ENCODE measurements at regions of chrX and their contacts with region 1.

Region 1: DNA sequence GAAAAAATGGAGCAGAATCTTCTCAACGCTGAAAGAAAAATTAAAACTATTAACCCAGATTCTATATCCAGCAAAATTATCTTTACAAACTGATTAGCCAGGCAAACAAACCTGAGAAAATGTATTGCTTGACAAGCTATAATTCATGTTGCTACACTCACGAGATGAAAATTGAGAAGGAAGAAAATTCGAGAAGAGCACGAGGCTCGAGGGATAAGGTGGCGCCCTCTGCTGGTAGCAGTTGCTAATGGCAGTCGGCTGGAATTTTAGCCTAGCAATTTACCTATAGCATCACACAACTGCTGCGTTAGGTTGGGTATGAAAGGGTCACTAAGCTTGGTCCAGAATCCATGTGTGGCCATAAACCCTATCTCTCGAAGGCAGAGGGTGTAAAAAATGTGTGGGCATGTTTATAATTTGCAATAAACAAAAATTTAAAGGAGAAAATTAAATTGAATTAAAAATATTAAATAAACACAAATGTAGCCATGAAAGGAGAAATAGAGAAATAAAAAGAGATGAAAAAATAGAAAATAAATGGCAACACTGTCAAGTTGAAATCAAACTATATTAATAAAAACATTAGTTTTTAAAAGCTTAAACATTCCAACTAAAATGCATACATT is 126.6 kb downstream of the PPP4R3C start:
- DNase-seq: peak; percentile 16
- H3K4me3 ChIP-seq: no peak overlapping the region
- H3K27ac ChIP-seq: no peak overlapping the region
- H3K4me1 ChIP-seq: no peaks in the 10 kb centered on the region
- H3K27me3 ChIP-seq: no peaks in the 10 kb centered on the region
- CTCF ChIP-seq: peak; percentile 50 to 61
- POLR2A ChIP-seq: no peak

Region 2: GRCh38 chrX:26851981-26852380 is 484.6 kb before region 1 on chrX:
- CTCF ChIA-PET with region 1: interaction called, 6 read pairs
- POLR2A ChIA-PET with region 1: no interaction called
- dilution Hi-C with region 1: no loop called
- intact Hi-C with region 1: loop called (anchors 5 kb)
- DNase-seq: peak; percentile 87
- H3K4me3 ChIP-seq: no peak overlapping the region
- H3K27ac ChIP-seq: peak overlapping the region; percentile 18
- H3K4me1 ChIP-seq: peaks cover 10% of the 10 kb centered on the region
- H3K27me3 ChIP-seq: no peaks in the 10 kb centered on the region
- CTCF ChIP-seq: peak; percentile 6 to 12
- POLR2A ChIP-seq: no peak

Region 3: GRCh38 chrX:27008486-27008885 is 328.1 kb before region 1 on chrX:
- CTCF ChIA-PET with region 1: no interaction called
- POLR2A ChIA-PET with region 1: no interaction called
- dilution Hi-C with region 1: no loop called
- intact Hi-C with region 1: no loop called
- DNase-seq: no peak
- H3K4me3 ChIP-seq: no peak overlapping the region
- H3K27ac ChIP-seq: no peak overlapping the region
- H3K4me1 ChIP-seq: no peaks in the 10 kb centered on the region
- H3K27me3 ChIP-seq: no peaks in the 10 kb centered on the region
- CTCF ChIP-seq: no peak
- POLR2A ChIP-seq: no peak